Common myeloid progenitor, CD34-positive (primary cell): ENCODE measurements at regions of chr6 and their contacts with region 1.

Region 1: GRCh38 chr6:43070028-43070632 is 6.0 kb upstream of the PTK7 start:
- DNase-seq: peak; percentile 71 to 88 (median 83)
- H3K4me3 ChIP-seq: no peak overlapping the region
- H3K27ac ChIP-seq: no peak overlapping the region
- H3K4me1 ChIP-seq: peaks cover 0 to under 1% (median 0%) of the 10 kb centered on the region in 4 experiments
- H3K27me3 ChIP-seq: no peaks in the 10 kb centered on the region

Region 2: DNA sequence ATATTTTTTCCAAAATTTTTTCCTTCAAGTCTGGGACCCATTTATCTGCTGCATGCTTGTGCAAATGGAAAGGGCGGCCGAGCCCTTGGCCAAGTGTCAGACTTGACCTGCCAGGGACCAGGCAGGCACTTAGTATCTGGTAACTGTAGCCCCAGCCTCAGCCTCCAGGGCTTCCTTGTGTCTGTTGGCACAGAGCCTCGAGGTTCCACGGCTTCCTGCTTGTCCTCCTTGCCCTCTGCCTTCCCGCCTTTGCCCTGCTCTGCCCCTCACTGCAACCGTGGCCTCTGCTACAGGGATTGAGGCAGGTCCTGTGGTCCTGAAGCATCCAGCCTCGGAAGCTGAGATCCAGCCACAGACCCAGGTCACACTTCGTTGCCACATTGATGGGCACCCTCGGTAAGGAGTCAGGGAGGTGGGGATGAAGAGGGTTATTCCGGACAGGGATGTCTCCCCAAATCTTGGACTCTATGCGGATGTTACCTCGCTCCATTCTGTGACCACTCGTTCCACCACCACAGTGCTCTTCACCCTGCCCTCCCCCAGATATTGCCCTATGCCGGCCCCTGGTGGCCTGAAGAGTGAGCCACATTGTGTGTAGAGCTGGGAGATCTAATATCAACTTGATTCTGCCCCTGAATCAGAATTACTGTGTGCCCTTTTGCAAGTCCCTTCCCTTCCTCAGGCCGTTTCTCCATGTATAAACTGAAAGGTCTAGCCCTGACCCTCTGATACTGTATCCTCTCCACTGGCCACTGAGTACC is 59.5 kb after region 1 on chr6:
- CTCF ChIA-PET with region 1: interaction called, 26 read pairs
- POLR2A ChIA-PET with region 1: interaction called, 4 read pairs
- DNase-seq: peak in 2 of 3 donors; percentile 55 to 58
- H3K4me3 ChIP-seq: no peak overlapping the region
- H3K27ac ChIP-seq: no peak overlapping the region
- H3K4me1 ChIP-seq: peaks cover 0 to 5% (median 0%) of the 10 kb centered on the region in 4 experiments
- H3K27me3 ChIP-seq: no peaks in the 10 kb centered on the region